CD14-positive monocyte (primary cell): ENCODE measurements at regions of chr16 and their contacts with region 1.

Region 1: GRCh38 chr16:67399181-67399733 is 6.0 kb upstream of the TPPP3 start:
- DNase-seq: peak; percentile 47 to 60 (median 58)
- H3K4me3 ChIP-seq: no peak overlapping the region
- H3K4me3 Mint-ChIP-seq: no peak overlapping the region
- H3K27ac ChIP-seq: no peak overlapping the region
- H3K27ac Mint-ChIP-seq: no peak overlapping the region
- H3K4me1 ChIP-seq: peaks cover 28 to 34% of the 10 kb centered on the region in 2 donors
- H3K4me1 Mint-ChIP-seq: peaks cover 18% of the 10 kb centered on the region
- H3K27me3 ChIP-seq: peaks cover 0 to under 1% of the 10 kb centered on the region in 2 donors
- H3K27me3 Mint-ChIP-seq: peaks cover 3 to 25% (median 8%) of the 10 kb centered on the region in 3 donors
- CTCF ChIP-seq: peak; percentile 97

Region 2: GRCh38 chr16:67279296-67280089 is 119.8 kb before region 1 on chr16 and contains the start of gene PLEKHG4:
- intact Hi-C with region 1: loop called (anchors 5 kb)
- DNase-seq: peak; percentile 71 to 80 (median 77)
- H3K4me3 ChIP-seq: peak within 1 kb of the TSS; percentile 47 to 72 (median 47)
- H3K4me3 Mint-ChIP-seq: peak within 1 kb of the TSS; percentile 75 to 86
- H3K27ac ChIP-seq: no peak within 1 kb of the TSS
- H3K27ac Mint-ChIP-seq: peak within 1 kb of the TSS in 1 of 7 donors; percentile 70
- H3K4me1 ChIP-seq: peaks cover 12 to 20% of the 10 kb centered on the region in 2 donors
- H3K4me1 Mint-ChIP-seq: peaks cover 14% of the 10 kb centered on the region
- H3K27me3 ChIP-seq: no peaks in the 10 kb centered on the region
- H3K27me3 Mint-ChIP-seq: no peaks in the 10 kb centered on the region
- CTCF ChIP-seq: peak; percentile 88
- polyA plus RNA-seq, gene PLEKHG4: 0.79 to 3.2 (median 3.0) TPM

Region 3: GRCh38 chr16:67349172-67349571 is 50.1 kb before region 1 on chr16:
- intact Hi-C with region 1: loop called (anchors 5 to 10 kb)
- DNase-seq: peak in 2 of 3 donors; percentile 36 to 50
- H3K4me3 ChIP-seq: no peak overlapping the region
- H3K4me3 Mint-ChIP-seq: no peak overlapping the region
- H3K27ac ChIP-seq: no peak overlapping the region
- H3K27ac Mint-ChIP-seq: no peak overlapping the region
- H3K4me1 ChIP-seq: peaks cover 0 to 6% of the 10 kb centered on the region in 2 donors
- H3K4me1 Mint-ChIP-seq: peaks cover 3% of the 10 kb centered on the region
- H3K27me3 ChIP-seq: no peaks in the 10 kb centered on the region
- H3K27me3 Mint-ChIP-seq: peaks cover 0 to 2% (median 2%) of the 10 kb centered on the region in 3 donors
- CTCF ChIP-seq: peak; percentile 69

Region 4: GRCh38 chr16:67372664-67373063 is 26.6 kb before region 1 on chr16:
- intact Hi-C with region 1: loop called in 1 of 2 experiments (anchors 2 kb)
- DNase-seq: peak in 2 of 3 donors; percentile 42 to 54
- H3K4me3 ChIP-seq: no peak overlapping the region
- H3K4me3 Mint-ChIP-seq: no peak overlapping the region
- H3K27ac ChIP-seq: no peak overlapping the region
- H3K27ac Mint-ChIP-seq: no peak overlapping the region
- H3K4me1 ChIP-seq: peaks cover 10 to 11% of the 10 kb centered on the region in 2 donors
- H3K4me1 Mint-ChIP-seq: peaks cover 15% of the 10 kb centered on the region
- H3K27me3 ChIP-seq: no peaks in the 10 kb centered on the region
- H3K27me3 Mint-ChIP-seq: peaks cover 0 to under 1% (median 0%) of the 10 kb centered on the region in 3 donors
- CTCF ChIP-seq: peak; percentile 57